ENCODE measurements at regions of chr16 and their contacts with region 1.

Region 1: DNA sequence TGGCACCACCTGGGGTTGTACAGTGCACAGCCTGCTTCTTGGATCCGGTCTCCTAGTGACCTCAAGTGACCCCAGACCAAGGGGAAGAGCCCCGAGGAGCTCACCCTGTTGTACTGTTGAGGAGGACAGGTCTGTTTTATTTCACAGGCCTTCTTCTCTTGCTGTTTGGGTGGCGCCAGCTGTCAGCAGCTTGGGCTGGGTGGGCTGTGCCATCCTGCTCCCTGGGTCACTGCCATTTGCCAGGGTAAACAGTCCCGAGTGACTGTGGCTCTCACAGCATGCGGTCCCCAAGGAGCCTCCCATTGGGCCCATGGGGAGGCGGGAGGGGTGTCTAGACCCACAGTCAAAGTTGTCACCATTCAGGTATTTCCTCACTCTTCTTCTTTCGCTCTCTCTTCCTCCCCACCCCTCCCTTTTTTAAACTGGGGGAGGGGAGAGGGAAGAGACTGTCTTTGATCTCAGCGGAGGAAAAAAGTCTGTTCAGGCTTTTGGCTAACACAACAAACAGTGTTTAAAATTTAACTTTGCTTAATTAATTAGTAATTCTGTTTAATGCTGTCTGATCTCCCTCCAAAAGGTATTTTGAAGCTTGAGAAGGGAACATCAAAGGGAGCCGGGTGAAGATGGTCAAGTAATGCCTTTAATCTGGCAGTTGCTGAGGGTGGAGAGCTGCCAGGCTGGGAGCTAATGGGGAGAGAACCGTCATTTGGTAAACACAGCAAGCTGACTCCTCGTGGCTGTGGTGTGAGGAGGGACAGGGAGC is 64.0 kb downstream of the SNX20 start:
- DNase-seq: peak; percentile 88
- H3K4me3 ChIP-seq: no peak overlapping the region
- H3K27ac ChIP-seq: peak overlapping the region; percentile 81 to 94 (median 90)
- H3K4me1 ChIP-seq: peaks cover 0 to 75% (median 72%) of the 10 kb centered on the region in 4 donors
- H3K27me3 ChIP-seq: no peaks in the 10 kb centered on the region
- CTCF ChIP-seq: no peak
- EP300 ChIP-seq: peak in 1 of 4 donors; percentile 39
- POLR2A ChIP-seq: no peak

Region 2: DNA sequence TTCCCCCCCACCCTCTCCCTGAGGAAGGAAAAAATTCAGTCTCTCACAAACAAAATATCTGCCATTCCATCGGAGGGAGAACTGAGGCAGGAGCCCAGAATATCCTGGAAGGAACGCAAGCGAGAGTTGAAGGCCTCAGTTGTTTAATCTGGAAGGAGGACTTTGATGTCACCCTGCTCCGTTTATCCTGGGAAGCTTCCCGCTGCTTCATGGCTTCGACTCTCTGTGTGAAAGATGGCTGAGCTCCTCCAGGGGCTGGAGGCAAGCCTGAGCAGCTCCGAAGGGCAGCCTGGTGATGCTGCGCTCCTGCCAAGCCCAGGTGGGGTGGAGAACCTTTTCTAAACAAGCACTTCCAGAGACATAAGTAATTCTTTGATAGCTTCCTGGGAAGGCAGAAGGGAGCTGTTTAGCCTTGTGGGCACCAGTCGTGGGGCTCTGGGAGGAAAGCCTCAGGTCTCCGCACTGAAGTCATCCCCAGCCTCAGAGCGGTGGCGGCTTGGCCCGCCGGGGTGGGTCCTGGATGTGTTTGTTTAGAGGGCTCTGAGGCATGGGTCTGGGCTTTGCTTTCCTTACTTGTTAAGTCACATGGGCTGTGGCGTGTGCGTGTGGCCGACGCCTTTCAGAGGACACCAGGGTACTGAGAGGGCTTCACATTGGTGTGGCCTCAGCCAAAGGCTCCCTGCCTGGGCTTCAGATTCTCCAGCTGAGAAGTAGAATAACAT is 61.0 kb before region 1 on chr16:
- intact Hi-C with region 1: no loop called
- DNase-seq: no peak
- H3K4me3 ChIP-seq: no peak overlapping the region
- H3K27ac ChIP-seq: peak overlapping the region; percentile 19 to 80 (median 42)
- H3K4me1 ChIP-seq: peaks cover 0 to 18% (median 0%) of the 10 kb centered on the region in 4 donors
- H3K27me3 ChIP-seq: no peaks in the 10 kb centered on the region
- CTCF ChIP-seq: no peak
- EP300 ChIP-seq: no peak
- POLR2A ChIP-seq: no peak

Region 3: GRCh38 chr16:50584033-50584722 is 32.9 kb before region 1 on chr16:
- intact Hi-C with region 1: loop called (anchors 5 kb)
- DNase-seq: no peak
- H3K4me3 ChIP-seq: no peak overlapping the region
- H3K27ac ChIP-seq: peak overlapping the region; percentile 83 to 87 (median 84)
- H3K4me1 ChIP-seq: peaks cover 0 to 50% (median 38%) of the 10 kb centered on the region in 4 donors
- H3K27me3 ChIP-seq: no peaks in the 10 kb centered on the region
- CTCF ChIP-seq: no peak
- EP300 ChIP-seq: no peak
- POLR2A ChIP-seq: no peak

Region 4: DNA sequence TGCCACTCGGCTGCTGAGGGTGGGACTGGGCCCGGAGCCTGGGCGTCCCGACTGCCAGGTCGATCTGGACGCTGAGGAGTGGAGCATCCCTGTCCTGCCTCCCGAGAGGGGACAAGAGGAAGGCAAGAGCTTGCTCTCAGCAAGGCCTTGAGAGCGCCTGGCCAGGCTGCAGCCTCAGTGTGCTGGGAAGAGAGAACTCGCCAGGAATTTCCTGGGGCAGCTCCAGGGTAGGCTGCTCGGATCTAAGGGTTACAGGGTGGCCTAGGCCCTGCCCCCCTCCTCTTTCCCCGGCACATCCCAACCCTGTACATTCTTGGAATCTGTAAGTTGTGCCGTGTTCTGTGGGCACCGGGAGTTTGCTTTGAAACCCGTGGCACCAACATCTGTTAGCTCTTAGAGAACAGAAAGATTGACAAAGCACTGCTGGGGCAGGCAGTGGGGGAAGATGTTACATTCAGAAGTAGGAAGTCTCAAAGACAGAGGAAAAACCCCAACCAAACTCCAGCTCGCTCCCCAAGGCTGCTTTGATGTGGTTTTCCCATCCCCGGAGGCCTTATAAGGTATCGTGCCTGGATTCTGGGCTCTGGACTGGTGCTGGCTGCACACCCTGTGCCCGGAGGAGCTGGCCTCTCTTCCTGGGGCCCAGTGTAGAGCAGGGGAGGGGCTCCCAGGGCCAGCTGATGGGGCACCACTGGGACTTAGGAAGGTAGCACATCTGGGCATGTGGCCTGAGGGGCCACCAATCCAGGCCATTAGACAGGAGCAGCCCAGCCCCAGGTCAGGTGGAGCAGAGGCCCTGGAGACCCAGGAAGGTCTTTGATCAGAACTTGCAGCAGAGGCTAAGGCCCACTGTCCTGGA is 13.6 kb before region 1 on chr16:
- intact Hi-C with region 1: loop called (anchors 2 kb)
- DNase-seq: peak; percentile 95
- H3K4me3 ChIP-seq: no peak overlapping the region
- H3K27ac ChIP-seq: peak overlapping the region; percentile 89 to 94 (median 91)
- H3K4me1 ChIP-seq: peaks cover 0 to 100% (median 96%) of the 10 kb centered on the region in 4 donors
- H3K27me3 ChIP-seq: no peaks in the 10 kb centered on the region
- CTCF ChIP-seq: no peak
- EP300 ChIP-seq: peak; percentile 65 to 88 (median 83)
- POLR2A ChIP-seq: no peak

Measured in sigmoid colon (tissue), 7 donors.